GM10248 (cell line): ENCODE measurements at regions of chr11 and their contacts with region 1.

Region 1: DNA sequence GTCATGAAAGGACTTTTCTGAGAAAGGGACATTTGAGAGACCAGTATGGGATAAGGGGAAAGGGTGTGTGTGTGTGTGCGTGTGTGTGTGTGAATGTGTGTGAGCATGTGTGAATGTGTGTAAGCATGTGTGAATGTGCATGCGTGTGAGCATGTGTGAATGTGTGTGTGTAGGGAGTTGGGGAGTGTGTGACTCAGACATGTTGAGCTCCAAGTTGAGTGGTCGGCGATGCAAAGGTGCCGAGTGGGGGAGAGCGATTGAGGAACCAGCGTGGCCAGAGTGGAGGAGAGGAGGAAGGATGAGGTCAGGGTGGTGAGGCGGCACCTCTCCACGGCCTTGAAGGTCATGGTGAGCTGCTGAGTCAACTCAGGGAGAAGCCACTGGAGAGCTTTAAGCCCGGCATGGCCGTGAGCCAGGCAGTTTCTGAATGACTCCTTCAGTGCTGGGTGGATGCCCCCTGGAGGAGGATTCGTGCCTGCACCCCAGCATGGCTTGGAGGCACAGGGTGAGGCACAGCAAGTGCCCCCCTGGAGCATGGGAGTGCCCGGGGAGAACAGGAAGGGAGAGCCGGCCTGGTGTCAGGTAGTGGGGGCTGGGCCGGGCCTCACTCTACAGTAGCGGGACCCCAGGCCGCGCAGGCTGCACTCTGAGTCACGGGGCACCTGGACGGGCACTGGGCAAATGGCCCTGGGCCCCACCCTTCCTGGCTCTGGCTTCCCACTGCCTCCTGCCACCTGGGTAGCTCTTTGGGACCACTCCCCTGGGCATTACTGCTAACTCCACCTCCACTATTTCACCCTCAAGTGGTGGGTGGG is 8.2 kb upstream of the CCDC88B start:
- DNase-seq: peak; percentile 79
- CTCF ChIP-seq: peak; percentile 56

Region 2: DNA sequence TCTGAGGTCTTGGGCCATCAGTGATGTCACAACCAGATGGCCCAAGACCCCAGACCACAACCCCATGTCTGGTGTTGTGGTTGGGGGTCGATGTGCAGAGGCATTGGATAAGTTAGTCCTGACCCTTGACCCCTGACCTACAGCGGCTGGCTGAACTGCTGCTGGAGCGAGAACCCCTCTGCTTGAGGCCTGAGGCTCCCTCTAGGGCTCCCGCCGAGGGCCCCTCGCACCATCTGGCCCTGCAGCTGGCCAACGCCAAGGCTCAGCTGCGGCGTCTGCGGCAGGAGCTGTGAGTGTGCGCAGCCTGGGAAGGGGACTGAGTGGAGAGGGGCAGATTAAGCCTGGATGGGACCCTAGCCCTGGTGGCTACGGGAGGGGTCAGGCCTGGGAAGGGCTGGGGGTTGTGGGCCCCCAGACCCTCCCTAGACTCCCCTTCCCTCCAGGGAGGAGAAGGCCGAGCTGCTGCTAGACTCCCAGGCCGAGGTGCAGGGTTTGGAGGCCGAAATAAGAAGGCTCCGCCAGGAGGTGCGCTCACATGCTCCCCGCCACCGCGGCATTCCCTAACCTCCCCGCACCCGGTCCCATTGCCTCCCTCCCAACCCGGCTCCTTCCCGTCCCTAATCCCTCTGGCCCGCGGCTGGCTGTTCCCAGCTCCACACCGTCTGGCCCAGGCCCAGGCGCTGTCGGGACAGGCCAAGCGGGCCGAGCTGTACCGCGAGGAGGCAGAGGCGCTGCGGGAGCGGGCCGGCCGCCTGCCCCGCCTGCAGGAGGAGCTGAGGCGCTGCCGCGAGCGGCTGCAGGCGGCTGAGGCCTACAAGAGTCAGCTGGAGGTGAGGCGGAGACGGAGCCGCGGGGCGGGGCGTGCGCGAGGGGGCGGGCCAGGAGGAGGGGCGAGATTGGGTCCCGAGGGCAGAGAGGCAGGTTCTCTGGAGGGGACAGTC is 10.4 kb after region 1 on chr11:
- CTCF ChIA-PET with region 1: interaction called, 50 read pairs
- POLR2A ChIA-PET with region 1: interaction called, 4 read pairs
- DNase-seq: peak; percentile 95
- CTCF ChIP-seq: peak; percentile 28

Region 3: GRCh38 chr11:64348611-64349484 is 17.1 kb after region 1 on chr11:
- CTCF ChIA-PET with region 1: interaction called, 50 read pairs
- POLR2A ChIA-PET with region 1: no interaction called
- DNase-seq: no peak
- CTCF ChIP-seq: no peak

Region 4: DNA sequence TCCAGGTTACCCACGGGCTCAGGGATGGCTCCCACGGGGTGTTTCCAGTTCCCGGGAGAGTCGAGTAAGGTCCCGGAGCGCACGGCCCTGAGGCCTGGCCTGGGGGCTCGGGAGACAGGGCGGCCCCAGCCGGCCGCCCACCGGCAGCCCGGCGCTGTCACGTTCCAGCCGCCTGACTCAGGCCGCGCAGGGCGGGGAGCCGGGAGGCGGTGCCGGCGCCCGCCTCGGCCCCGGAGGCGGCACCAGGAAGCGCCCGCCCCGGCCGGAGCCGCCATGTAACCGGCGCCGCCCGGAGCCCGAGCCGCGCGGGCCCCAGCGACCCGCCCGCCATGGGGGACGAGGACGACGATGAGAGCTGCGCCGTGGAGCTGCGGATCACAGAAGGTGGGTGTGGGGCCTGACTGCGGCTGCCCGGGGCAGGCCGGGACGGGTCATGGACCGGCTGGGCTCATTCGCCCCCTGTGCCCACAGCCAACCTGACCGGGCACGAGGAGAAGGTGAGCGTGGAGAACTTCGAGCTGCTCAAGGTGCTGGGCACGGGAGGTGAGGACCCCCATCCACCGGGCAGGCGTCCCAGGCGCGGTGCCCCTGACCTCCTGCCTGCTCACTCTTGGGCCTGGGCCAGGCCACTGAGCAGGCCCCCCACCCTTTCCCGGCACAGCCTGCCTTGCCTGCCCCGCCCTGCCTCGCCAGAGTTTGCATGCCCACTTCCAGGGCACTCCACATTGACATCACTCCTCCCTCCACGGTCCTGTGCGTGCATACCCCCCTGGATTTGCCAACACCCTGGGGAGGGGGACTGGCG is 27.3 kb after region 1 on chr11 and contains the start of gene RPS6KA4:
- CTCF ChIA-PET with region 1: interaction called, 43 read pairs
- POLR2A ChIA-PET with region 1: no interaction called
- DNase-seq: peak; percentile 93
- CTCF ChIP-seq: no peak